Activated CD4-positive, alpha-beta memory T cell treated with anti-CD3 and anti-CD28 coated beads for 36 hours (primary cell): ENCODE measurements at regions of chr17 and their contacts with region 1.

Region 1: DNA sequence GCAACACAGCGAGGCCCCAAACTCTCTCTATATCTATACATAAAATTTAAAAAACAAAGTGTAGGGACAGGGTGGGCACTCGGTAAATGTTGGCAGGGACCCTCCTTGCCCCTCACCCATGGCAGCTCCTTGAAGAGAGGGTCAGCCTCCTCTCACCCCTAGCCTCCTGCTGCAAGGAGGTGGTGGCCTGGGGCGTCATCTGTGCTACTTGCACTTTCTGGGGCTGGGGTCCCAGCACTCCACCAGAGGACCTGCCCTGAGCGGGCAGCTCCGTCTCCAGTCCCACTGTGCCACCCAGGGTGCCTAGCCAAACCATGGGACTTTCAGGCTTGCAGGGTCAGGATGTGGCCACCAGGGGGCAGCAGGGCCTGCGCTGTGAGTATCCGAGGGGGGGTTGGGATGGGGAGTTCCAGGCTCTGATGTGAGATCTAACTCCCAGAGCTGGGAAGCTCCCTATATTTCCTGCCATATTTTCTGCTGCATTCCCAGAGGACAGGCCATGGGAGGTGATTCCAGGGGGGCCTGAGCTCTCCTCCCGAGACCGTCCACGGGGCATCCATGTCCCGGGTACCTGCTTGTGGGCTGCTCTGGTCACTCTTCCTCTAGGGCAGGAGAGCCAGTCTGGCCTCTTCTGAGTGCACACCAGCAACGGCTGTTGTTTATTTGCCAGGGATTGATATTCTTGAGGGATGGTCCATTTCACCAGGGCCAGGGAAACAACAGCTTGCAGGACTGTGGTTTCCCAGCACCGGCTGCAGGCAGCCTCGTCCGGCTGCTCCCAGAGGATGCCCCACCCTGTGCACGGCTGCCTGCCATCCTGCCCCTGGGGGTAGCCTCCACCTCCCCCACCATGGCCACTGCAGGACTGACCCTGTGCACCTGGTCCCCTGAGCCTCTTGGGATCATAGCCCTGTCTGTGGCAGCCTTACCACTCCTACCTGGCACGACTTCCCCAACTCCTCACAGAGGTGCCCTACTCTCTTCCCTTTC is 1.1 kb downstream of the GPR142 start:
- DNase-seq: peak; percentile 82
- H3K4me3 Mint-ChIP-seq: peak overlapping the region; percentile 35
- H3K27ac Mint-ChIP-seq: no peak overlapping the region
- H3K4me1 Mint-ChIP-seq: peaks cover 12% of the 10 kb centered on the region
- H3K27me3 Mint-ChIP-seq: no peaks in the 10 kb centered on the region

Region 2: GRCh38 chr17:74152591-74153455 is 215.6 kb before region 1 on chr17:
- CTCF ChIA-PET with region 1: no interaction called
- POLR2A ChIA-PET with region 1: no interaction called
- intact Hi-C with region 1: no loop called
- DNase-seq: no peak
- H3K4me3 Mint-ChIP-seq: no peak overlapping the region
- H3K27ac Mint-ChIP-seq: no peak overlapping the region
- H3K4me1 Mint-ChIP-seq: no peaks in the 10 kb centered on the region
- H3K27me3 Mint-ChIP-seq: peaks cover 25% of the 10 kb centered on the region

Region 3: GRCh38 chr17:74296548-74296936 is 71.8 kb before region 1 on chr17:
- CTCF ChIA-PET with region 1: interaction called, 16 read pairs
- POLR2A ChIA-PET with region 1: interaction called, 4 read pairs
- intact Hi-C with region 1: no loop called
- DNase-seq: peak; percentile 73
- H3K4me3 Mint-ChIP-seq: no peak overlapping the region
- H3K27ac Mint-ChIP-seq: no peak overlapping the region
- H3K4me1 Mint-ChIP-seq: peaks cover 28% of the 10 kb centered on the region
- H3K27me3 Mint-ChIP-seq: no peaks in the 10 kb centered on the region

Region 4: DNA sequence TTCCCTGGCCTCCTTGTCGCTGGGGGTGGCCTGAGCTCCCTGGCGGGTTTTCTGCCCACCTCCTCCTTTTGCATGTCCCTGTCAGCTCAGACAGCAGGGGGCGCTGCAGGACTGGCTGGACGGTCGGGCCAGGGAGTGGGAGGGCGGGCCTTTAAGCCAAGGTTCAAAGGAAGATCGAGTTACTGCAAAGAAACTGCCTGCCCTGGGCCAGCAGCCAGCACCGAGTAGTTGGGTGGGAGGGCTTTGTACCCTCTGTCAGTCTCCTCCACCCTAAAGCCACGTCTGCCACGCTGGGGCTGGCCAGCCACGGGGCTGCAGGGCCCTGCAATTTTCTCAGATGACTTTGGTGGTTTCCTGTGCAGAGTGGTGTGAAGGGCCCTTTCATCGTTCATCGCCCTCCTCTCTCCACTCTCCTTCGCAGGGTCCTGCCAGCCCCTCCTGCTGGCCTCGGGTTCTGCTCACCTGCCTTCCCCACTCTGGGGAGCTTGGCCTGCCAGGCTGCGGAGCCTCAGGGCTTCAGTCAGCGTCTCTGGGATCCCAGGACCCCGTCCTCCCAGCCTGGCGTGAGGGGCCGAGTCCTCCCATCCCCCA is 11.2 kb after region 1 on chr17:
- CTCF ChIA-PET with region 1: interaction called, 52 read pairs
- POLR2A ChIA-PET with region 1: no interaction called
- intact Hi-C with region 1: no loop called
- DNase-seq: peak; percentile 94
- H3K4me3 Mint-ChIP-seq: no peak overlapping the region
- H3K27ac Mint-ChIP-seq: no peak overlapping the region
- H3K4me1 Mint-ChIP-seq: no peaks in the 10 kb centered on the region
- H3K27me3 Mint-ChIP-seq: peaks cover 1% of the 10 kb centered on the region

Region 5: GRCh38 chr17:74437702-74438101 is 69.3 kb after region 1 on chr17:
- CTCF ChIA-PET with region 1: interaction called, 10 read pairs
- POLR2A ChIA-PET with region 1: no interaction called
- intact Hi-C with region 1: no loop called
- DNase-seq: peak; percentile 37
- H3K4me3 Mint-ChIP-seq: no peak overlapping the region
- H3K27ac Mint-ChIP-seq: no peak overlapping the region
- H3K4me1 Mint-ChIP-seq: no peaks in the 10 kb centered on the region
- H3K27me3 Mint-ChIP-seq: peaks cover 25% of the 10 kb centered on the region

Region 6: GRCh38 chr17:74457146-74457819 is 88.9 kb after region 1 on chr17:
- CTCF ChIA-PET with region 1: interaction called, 4 read pairs
- POLR2A ChIA-PET with region 1: no interaction called
- intact Hi-C with region 1: loop called (anchors 1 kb)
- DNase-seq: peak; percentile 80
- H3K4me3 Mint-ChIP-seq: no peak overlapping the region
- H3K27ac Mint-ChIP-seq: no peak overlapping the region
- H3K4me1 Mint-ChIP-seq: peaks cover 23% of the 10 kb centered on the region
- H3K27me3 Mint-ChIP-seq: peaks cover 3% of the 10 kb centered on the region

Region 7: GRCh38 chr17:74493381-74493833 is 125.0 kb after region 1 on chr17:
- CTCF ChIA-PET with region 1: interaction called, 34 read pairs
- POLR2A ChIA-PET with region 1: no interaction called
- intact Hi-C with region 1: loop called (anchors 2 kb)
- DNase-seq: peak; percentile 80
- H3K4me3 Mint-ChIP-seq: no peak overlapping the region
- H3K27ac Mint-ChIP-seq: no peak overlapping the region
- H3K4me1 Mint-ChIP-seq: peaks cover 2% of the 10 kb centered on the region
- H3K27me3 Mint-ChIP-seq: peaks cover 2% of the 10 kb centered on the region

Region 8: GRCh38 chr17:74528491-74529199 is 160.3 kb after region 1 on chr17:
- CTCF ChIA-PET with region 1: interaction called, 24 read pairs
- POLR2A ChIA-PET with region 1: no interaction called
- intact Hi-C with region 1: loop called (anchors 2 kb)
- DNase-seq: peak; percentile 7
- H3K4me3 Mint-ChIP-seq: no peak overlapping the region
- H3K27ac Mint-ChIP-seq: no peak overlapping the region
- H3K4me1 Mint-ChIP-seq: peaks cover 2% of the 10 kb centered on the region
- H3K27me3 Mint-ChIP-seq: peaks cover 26% of the 10 kb centered on the region